Heart right ventricle (tissue), 16 donors: ENCODE measurements at regions of chr10 and their contacts with region 1.

Region 1: DNA sequence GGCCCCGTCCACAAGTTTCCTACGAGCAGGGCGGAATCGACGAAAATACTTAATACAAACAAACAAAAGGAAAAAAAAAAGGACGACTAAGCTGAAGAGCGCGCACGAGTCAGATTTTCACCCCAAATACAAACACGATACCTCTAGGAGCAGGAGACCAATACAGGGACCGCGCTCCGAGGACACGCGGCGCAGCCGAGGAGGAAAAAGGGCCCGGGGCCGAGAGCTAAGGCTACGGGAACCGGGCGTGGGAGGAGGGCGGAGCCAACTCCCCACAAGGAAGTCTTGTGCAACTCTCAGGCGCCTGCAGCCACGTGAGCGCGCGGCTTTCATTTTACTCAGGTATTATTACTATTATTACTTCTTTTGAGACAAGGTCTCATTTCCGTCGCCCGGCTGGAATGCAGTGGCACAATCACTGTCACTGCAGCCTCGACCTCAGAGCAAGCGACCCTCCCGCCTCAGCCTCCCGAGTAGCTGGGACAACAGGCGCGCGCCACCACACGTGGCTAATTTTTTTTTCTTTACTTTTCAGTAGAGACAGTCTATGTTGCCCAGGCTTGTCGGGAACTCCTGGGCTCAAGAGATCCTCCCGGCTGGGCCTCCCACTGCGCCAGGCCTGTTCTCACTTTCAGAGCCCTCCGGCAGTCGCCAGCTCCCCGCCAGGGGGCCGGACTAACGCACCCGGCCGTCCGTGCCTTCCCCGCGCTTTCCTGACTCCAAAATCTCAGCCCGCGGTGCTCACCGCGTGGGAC is 1.2 kb downstream of the HNRNPF start:
- DNase-seq: peak; percentile 86 to 92
- ATAC-seq: peak; percentile 75 to 87 (median 79)
- H3K4me3 ChIP-seq: peak overlapping the region; percentile 52 to 93 (median 83)
- H3K27ac ChIP-seq: peak overlapping the region; percentile 96 to 100 (median 98)
- H3K4me1 ChIP-seq: peaks cover 2 to 58% (median 46%) of the 10 kb centered on the region in 9 donors
- H3K27me3 ChIP-seq: no peaks in the 10 kb centered on the region
- CTCF ChIP-seq: peak in 7 of 9 donors; percentile 15 to 54 (median 42)

Region 2: GRCh38 chr10:43249962-43250614 is 157.7 kb before region 1 on chr10:
- intact Hi-C with region 1: no loop called
- DNase-seq: peak in 1 of 2 donors; percentile 2
- ATAC-seq: no peak
- H3K4me3 ChIP-seq: no peak overlapping the region
- H3K27ac ChIP-seq: no peak overlapping the region
- H3K4me1 ChIP-seq: peaks cover 0 to 3% (median 0%) of the 10 kb centered on the region in 9 donors
- H3K27me3 ChIP-seq: peaks cover 0 to 5% (median 0%) of the 10 kb centered on the region in 7 donors
- CTCF ChIP-seq: no peak

Region 3: GRCh38 chr10:43396928-43397624 is 10.7 kb before region 1 on chr10:
- intact Hi-C with region 1: loop called in 2 of 10 experiments (anchors 1 kb)
- DNase-seq: peak; percentile 88 to 91
- ATAC-seq: peak; percentile 90 to 93 (median 91)
- H3K4me3 ChIP-seq: peak overlapping the region; percentile 48 to 85 (median 74)
- H3K27ac ChIP-seq: peak overlapping the region; percentile 94 to 99 (median 98)
- H3K4me1 ChIP-seq: peaks cover 9 to 85% (median 62%) of the 10 kb centered on the region in 9 donors
- H3K27me3 ChIP-seq: no peaks in the 10 kb centered on the region
- CTCF ChIP-seq: no peak

Region 4: DNA sequence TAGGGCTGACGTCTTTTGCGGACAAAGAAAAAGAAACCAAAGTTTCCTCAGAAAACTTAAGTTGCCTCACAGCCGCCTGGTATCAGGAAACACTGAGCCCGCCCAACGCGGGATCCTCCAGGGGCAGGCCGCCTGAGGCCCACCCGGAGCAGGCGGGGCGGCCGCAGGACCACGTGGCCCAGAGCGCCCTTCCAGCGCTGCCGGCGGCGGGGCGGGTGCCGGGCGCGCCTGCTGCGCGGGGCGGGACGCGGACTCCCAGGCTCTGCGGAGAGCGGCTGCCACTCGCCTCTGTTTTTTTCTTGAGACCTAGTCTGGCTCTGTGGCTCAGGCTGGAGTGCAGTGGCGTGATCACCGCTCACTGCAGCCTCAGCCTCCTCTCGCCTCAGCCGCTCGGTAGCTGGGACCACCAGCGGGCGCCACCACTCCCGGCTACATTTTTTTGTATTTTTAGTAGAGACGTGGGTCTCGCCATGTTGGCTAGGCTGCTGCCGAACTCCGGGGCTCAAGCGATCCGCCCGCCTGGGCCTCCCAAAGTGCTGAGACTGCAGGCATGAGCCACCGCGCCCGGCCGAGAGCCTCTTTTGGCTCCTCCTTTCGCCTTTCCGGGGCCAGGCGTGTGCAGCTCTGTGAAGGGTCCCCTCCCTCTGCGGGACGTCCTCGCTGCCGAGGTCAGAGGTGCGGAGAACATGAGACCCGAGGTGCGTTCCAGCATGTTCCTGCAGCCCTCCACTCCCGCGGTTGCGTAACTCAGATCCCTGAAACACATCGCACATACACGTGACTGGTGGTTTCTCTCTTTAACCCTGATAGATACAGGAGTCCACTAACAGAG is 12.8 kb after region 1 on chr10:
- intact Hi-C with region 1: loop called in 2 of 10 experiments (anchors 1 kb)
- DNase-seq: peak; percentile 86 to 89
- ATAC-seq: peak; percentile 97 to 100 (median 98)
- H3K4me3 ChIP-seq: peak overlapping the region; percentile 41 to 75 (median 66)
- H3K27ac ChIP-seq: peak overlapping the region; percentile 94 to 100 (median 99)
- H3K4me1 ChIP-seq: peaks cover 0 to 41% (median 12%) of the 10 kb centered on the region in 9 donors
- H3K27me3 ChIP-seq: no peaks in the 10 kb centered on the region
- CTCF ChIP-seq: peak in 6 of 9 donors; percentile 20 to 55 (median 28)

Region 5: DNA sequence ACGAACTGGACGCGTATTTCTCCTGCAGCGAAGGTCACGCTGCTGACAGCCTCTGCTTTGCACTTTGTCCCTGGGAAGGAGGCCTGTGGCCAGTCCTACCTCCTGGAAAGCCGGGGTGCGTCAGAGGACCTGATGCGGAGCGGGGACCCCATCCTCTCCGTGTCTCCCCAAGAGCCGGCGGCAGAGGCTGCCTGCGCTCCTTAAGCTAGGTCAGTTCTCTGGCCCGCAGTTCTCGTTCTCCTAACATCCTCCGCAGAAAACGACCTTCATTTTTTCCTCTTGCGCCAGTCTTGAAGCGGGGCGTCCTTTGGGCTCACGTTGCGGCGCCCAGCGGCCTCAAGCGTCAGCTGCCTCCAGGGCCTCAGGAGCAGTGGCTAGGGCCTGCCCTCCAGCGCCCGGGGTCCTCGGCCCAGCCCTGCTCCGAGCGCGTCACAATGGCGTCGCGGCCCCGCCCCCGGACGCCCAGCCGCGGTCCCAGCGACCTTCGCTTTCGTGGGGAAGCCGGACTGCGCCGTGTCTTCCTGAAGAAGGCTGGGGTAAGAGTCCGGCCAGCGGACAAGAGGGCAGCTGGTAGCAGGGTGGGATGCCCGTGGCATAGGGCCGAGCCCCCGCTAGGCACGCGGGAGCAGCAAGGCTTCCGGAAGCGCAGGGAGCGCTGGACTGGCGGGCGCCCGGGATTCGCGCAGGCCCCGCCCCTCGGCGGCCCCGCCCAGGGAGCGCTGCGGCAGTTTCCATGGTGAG is 28.8 kb after region 1 on chr10 and contains the start of gene ZNF487:
- intact Hi-C with region 1: loop called in 3 of 10 experiments (anchors 1 to 2 kb)
- DNase-seq: peak; percentile 90 to 91
- ATAC-seq: peak; percentile 99
- H3K4me3 ChIP-seq: peak within 1 kb of the TSS; percentile 43 to 99 (median 82)
- H3K27ac ChIP-seq: peak within 1 kb of the TSS; percentile 96 to 100 (median 100)
- H3K4me1 ChIP-seq: peaks cover 0 to 33% (median 10%) of the 10 kb centered on the region in 9 donors
- H3K27me3 ChIP-seq: no peaks in the 10 kb centered on the region
- CTCF ChIP-seq: peak in 6 of 9 donors; percentile 11 to 60 (median 46)
- total RNA-seq, gene ZNF487: 1.6 to 4.2 (median 2.4) TPM

Region 6: GRCh38 chr10:45000752-45001380 is 1593.1 kb after region 1 on chr10 and contains the start of gene ZNF22:
- intact Hi-C with region 1: loop called in 1 of 10 experiments (anchors 5 kb)
- DNase-seq: peak; percentile 80 to 81
- ATAC-seq: peak; percentile 50 to 83 (median 68)
- H3K4me3 ChIP-seq: peak within 1 kb of the TSS; percentile 29 to 75 (median 68)
- H3K27ac ChIP-seq: peak within 1 kb of the TSS; percentile 94 to 100 (median 97)
- H3K4me1 ChIP-seq: peaks cover 19 to 83% (median 70%) of the 10 kb centered on the region in 9 donors
- H3K27me3 ChIP-seq: no peaks in the 10 kb centered on the region
- CTCF ChIP-seq: peak in 3 of 9 donors; percentile 24 to 37 (median 32)
- total RNA-seq, gene ZNF22: 11.0 to 17.2 (median 15.4) TPM